ENCODE measurements at regions of chr10 and their contacts with region 1.

Region 1: DNA sequence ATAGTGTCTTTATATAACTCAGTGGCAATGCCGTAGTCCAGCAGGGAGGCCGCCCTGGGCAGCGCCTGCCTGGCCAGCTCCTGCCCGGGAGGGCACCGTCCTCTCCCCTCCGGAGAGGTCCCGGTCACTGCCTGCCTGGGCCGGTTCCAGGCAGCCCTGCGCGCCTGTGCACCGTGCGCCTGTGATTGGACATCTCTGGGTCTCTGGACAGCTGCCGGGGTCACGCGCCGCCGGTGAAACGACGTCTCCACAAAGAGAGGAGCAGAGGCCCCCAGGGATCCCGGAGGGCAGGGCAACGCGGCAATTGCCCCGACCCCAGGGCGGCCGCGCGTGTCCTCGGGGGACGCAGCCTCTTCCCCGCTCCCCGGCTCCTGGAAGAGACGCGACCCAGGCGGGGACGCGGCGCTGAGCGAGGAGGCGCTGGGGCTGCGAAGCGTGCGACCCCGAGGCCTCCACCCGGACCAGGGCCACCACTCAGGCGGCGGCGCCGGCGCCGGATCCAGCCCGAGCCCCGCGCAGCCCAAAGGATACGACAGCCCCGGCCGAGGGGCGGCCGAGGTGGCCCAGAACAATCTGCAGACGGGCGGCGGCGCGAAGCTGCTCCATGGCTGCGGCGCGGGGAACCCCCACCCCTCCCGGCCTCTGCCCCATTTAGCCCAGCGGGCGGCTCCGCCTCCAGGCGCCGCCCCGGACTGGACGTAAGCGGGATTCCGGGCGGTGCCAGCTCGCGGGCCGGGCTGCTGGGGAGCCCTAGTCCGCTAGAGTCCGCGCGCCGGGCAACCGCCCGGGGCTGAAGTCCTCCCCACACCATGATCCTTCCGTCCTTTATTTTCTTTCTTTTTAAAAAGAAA is at the start of gene PHYH:
- DNase-seq: peak; percentile 81
- ATAC-seq: peak; percentile 70
- H3K4me3 Mint-ChIP-seq: peak within 1 kb of the TSS; percentile 69
- H3K27ac Mint-ChIP-seq: peak within 1 kb of the TSS; percentile 66
- H3K4me1 Mint-ChIP-seq: peaks cover 13% of the 10 kb centered on the region
- H3K27me3 Mint-ChIP-seq: peaks cover 13% of the 10 kb centered on the region; the same call in 1 of the 2 replicates
- CTCF ChIP-seq: no peak
- total RNA-seq, gene PHYH: 22.5 to 35.1 TPM (median 32.0 TPM) in 3 replicates

Region 2: DNA sequence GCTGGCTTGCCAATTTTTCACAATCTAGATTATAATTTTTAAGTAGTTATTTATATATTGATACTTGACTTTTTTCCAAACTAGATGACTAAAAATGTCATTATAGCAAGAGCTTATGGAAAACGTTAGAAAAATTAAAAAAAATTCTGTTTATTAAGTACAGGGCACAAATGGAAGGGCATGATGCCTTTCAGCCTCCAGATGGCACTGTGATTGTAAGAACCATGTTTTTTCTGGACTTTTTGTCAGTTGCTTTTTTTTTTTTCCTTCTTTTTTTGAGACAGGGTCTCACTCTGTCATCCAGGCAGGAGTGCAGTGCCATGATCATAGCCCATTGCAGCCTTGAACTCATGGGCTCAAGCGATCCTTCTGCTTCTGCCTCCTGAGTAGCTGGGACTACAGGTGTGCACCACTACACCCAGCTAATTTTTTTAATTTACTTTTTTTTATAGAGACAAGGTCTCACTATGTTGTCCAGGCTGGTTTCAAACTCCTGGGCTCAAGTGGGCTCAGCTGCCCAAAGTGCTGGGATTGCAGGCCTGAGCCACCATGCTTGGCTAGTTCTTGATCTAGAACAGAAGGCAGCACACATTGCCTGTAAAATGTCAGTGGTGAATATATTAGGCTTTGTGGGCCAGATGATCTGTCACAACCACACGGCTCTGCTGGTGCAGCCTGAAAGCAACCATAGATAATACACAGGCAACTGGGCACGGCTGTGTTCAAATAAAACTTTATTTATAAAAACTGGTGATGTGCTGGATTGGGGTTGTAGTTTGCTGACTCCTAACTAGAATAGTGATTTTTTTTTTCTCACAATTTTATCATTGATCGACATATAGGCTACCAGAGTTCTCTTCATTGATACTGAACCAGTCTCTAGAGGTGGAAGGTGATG is 92.9 kb before region 1 on chr10:
- CTCF ChIA-PET with region 1: interaction called, 15 read pairs
- POLR2A ChIA-PET with region 1: no interaction called
- DNase-seq: no peak
- ATAC-seq: no peak
- H3K4me3 Mint-ChIP-seq: no peak overlapping the region
- H3K27ac Mint-ChIP-seq: no peak overlapping the region
- H3K4me1 Mint-ChIP-seq: 0 out of 2 replicates have a peak, but pooled peaks cover 2% of the 10 kb centered on the region
- H3K27me3 Mint-ChIP-seq: no peaks in the 10 kb centered on the region
- CTCF ChIP-seq: 0 out of 2 replicates have a peak, but pooled peaks have one; percentile 27

Region 3: DNA sequence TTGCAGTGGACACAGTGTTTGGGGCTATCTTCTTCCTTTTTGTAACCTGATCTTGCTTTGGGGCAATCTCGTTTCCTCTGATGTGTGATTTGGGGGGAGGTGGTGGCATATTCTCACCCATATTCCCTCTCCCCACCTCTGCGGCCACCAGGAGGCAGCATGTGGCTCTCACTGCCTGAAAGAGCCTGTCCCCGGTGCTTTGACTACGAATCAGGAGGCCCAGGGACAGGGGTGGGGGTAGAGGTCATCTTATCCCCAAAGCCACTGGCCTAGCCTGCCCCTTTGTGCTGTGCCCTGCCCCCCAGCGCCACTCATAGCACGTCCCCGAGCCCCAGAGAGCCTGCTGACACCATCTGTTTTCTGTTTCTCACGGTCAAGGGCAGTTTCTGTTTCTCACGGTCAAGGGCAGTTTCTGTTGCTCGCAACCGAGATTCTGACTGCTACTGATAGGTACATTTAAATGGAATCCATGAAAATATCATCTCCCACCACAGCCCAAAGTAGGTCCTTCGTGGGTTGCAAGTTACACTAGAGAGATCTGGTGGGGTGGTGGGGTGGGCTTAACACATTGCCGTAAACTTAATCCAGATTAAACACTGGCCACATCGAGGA is 28.0 kb before region 1 on chr10:
- CTCF ChIA-PET with region 1: interaction called, 35 read pairs
- POLR2A ChIA-PET with region 1: interaction called, 3 read pairs
- DNase-seq: peak; percentile 86
- ATAC-seq: peak; percentile 96
- H3K4me3 Mint-ChIP-seq: no peak overlapping the region
- H3K27ac Mint-ChIP-seq: peak overlapping the region; percentile 96
- H3K4me1 Mint-ChIP-seq: peaks cover 38% of the 10 kb centered on the region
- H3K27me3 Mint-ChIP-seq: no peaks in the 10 kb centered on the region
- CTCF ChIP-seq: peak; percentile 41; the same call in 1 of the 2 replicates

Region 4: GRCh38 chr10:13317474-13317873 is 17.8 kb after region 1 on chr10:
- CTCF ChIA-PET with region 1: interaction called, 13 read pairs
- POLR2A ChIA-PET with region 1: interaction called, 4 read pairs
- DNase-seq: no peak
- ATAC-seq: peak; percentile 14; the same call in 1 of the 2 replicates
- H3K4me3 Mint-ChIP-seq: no peak overlapping the region
- H3K27ac Mint-ChIP-seq: peak overlapping the region; percentile 85
- H3K4me1 Mint-ChIP-seq: peaks cover 20% of the 10 kb centered on the region
- H3K27me3 Mint-ChIP-seq: no peaks in the 10 kb centered on the region
- CTCF ChIP-seq: no peak

Region 5: DNA sequence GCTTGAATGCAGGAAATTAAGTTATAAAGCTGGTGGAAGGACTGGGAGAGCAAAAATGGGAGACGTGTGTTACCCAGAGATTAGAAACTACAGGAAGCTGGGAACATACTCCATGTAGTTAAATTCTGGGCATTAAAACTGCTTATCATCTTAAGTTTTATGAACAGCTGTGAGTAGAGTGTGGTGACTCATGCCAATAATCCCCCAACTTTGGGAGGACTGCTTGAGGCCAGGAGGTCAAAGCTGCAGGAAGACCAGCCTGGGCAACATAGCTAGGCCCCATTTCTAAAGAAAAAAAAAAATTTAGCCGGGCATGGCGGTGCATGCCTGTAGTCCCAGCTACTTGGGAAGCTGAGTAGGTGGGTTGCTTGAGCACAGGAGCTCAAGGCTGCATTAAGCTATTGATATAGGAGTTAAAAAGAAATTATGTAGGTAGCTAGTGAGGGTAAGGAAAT is 104.7 kb after region 1 on chr10:
- CTCF ChIA-PET with region 1: no interaction called
- POLR2A ChIA-PET with region 1: no interaction called
- DNase-seq: no peak
- ATAC-seq: no peak
- H3K4me3 Mint-ChIP-seq: no peak overlapping the region
- H3K27ac Mint-ChIP-seq: peak overlapping the region; percentile 90
- H3K4me1 Mint-ChIP-seq: peaks cover 35% of the 10 kb centered on the region
- H3K27me3 Mint-ChIP-seq: peaks cover 14% of the 10 kb centered on the region
- CTCF ChIP-seq: no peak